T-cell (primary cell): ENCODE measurements at regions of chr4 and their contacts with region 1.

Region 1: GRCh38 chr4:102449751-102450352 is 51.3 kb upstream of the NFKB1 start:
- DNase-seq: peak in 34 of 35 experiments; percentile 5 to 83 (median 44)
- ATAC-seq: peak; percentile 66 to 85 (median 76)
- H3K4me3 ChIP-seq: no peak overlapping the region
- H3K4me3 Mint-ChIP-seq: no peak overlapping the region
- H3K27ac ChIP-seq: no peak overlapping the region
- H3K27ac Mint-ChIP-seq: no peak overlapping the region
- H3K4me1 ChIP-seq: peaks cover 3% of the 10 kb centered on the region in 2 experiments
- H3K4me1 Mint-ChIP-seq: peaks cover 9 to 17% (median 16%) of the 10 kb centered on the region in 3 donors
- H3K27me3 ChIP-seq: no peaks in the 10 kb centered on the region
- H3K27me3 Mint-ChIP-seq: peaks cover 0 to 1% of the 10 kb centered on the region in 2 donors

Region 2: DNA sequence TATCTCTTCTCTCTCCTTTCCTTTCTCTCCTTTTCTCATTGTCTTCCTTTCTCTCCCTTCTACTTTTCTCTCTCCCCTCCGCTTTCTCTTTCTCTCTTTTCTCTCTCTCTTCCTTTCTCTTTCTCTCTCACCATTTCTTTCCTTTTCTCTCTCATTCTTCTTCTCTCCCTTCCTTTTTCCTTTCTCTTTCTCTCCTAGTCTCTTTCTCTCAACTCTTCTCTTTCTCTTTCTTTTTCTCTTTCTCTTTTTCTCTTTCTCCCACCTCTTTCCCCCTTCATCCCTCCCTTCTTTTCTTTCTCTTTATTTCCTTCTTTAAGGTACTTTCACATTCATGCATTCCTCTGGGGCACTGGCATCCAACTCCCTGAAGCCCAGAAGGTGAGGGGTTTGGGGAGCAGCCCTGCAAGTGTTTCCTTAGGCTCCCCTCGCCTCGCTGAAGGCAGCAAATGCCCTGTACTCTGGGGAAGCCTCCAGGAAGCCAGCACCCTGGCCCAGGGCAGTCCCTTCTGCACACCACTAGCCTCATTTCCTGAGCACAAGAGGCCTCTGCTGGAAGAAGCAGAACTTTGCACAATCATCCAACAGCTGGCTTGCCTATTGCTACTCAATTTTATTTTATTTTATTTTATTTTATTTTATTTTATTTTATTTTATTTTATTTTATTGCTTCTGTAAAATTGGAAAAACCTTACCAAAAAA is 175.5 kb after region 1 on chr4:
- CTCF ChIA-PET with region 1: interaction called, 11 to 15 read pairs
- POLR2A ChIA-PET with region 1: no interaction called
- DNase-seq: peak; percentile 38 to 80 (median 63)
- ATAC-seq: peak; percentile 82 to 89 (median 85)
- H3K4me3 ChIP-seq: no peak overlapping the region
- H3K4me3 Mint-ChIP-seq: peak overlapping the region; percentile 39 to 68 (median 40)
- H3K27ac ChIP-seq: peak overlapping the region; percentile 41
- H3K27ac Mint-ChIP-seq: peak overlapping the region; percentile 83 to 89
- H3K4me1 ChIP-seq: peaks cover 14 to 18% of the 10 kb centered on the region in 2 experiments
- H3K4me1 Mint-ChIP-seq: peaks cover 65 to 73% (median 73%) of the 10 kb centered on the region in 3 donors
- H3K27me3 ChIP-seq: no peaks in the 10 kb centered on the region
- H3K27me3 Mint-ChIP-seq: no peaks in the 10 kb centered on the region